ENCODE measurements at regions of chr1 and their contacts with region 1.

Region 1: DNA sequence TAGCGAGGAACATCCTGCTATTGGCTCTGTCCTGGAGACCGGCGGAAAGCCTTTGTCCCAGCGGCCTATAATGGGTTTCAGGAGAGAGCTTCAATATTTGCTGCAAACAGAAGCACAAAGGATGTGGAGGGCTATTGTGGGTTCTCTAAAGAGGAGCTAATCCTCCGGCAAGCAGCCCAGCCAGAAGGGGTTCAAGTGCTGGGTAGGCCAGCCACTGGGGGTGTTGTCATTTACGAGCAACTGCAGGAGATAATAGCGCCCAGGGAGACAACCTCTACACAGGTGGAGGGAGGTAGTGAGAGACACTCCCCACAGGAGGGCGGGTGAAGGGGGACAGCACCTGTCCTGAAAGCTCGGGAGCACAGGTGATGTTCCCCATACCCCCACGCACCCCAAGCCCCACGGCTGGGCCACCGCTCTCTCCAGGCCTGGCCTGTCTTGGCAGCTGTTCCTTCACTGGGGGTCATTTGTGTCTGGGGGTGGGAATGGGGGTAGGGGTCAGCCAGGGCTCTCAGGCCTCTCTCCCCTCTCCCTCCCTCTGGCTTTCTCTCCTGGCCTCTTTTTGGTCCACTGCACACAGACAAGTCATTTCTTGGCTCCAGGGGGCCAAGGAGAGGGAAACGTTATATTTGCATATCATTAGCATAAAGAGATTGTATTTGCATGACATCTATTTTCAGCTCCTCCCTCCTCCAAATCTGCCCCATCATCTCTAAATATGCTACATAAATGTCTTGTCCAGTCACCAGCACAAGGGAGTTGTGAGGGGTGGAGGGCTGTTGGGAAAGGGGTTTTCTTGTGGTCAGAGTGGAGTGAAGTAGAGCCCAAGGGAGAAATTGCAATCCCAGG is 22.0 kb upstream of the SLC26A9 start:
- DNase-seq: no peak
- ATAC-seq: no peak
- H3K4me3 ChIP-seq: no peak overlapping the region
- H3K27ac ChIP-seq: no peak overlapping the region
- H3K4me1 ChIP-seq: no peaks in the 10 kb centered on the region
- H3K27me3 ChIP-seq: peaks cover 36% of the 10 kb centered on the region
- CTCF ChIP-seq: no peak
- POLR2A ChIP-seq: no peak
- RAD21 ChIP-seq: no peak

Region 2: GRCh38 chr1:205925730-205926129 is 39.5 kb before region 1 on chr1:
- CTCF ChIA-PET with region 1: no interaction called
- POLR2A ChIA-PET with region 1: no interaction called
- dilution Hi-C with region 1: no loop called
- in situ Hi-C with region 1: loop called (anchors 5 kb)
- intact Hi-C with region 1: no loop called
- DNase-seq: peak; percentile 85
- ATAC-seq: peak; percentile 42
- H3K4me3 ChIP-seq: no peak overlapping the region
- H3K27ac ChIP-seq: no peak overlapping the region
- H3K4me1 ChIP-seq: no peaks in the 10 kb centered on the region
- H3K27me3 ChIP-seq: peaks cover 42% of the 10 kb centered on the region
- CTCF ChIP-seq: no peak
- POLR2A ChIP-seq: no peak
- RAD21 ChIP-seq: no peak

Region 3: DNA sequence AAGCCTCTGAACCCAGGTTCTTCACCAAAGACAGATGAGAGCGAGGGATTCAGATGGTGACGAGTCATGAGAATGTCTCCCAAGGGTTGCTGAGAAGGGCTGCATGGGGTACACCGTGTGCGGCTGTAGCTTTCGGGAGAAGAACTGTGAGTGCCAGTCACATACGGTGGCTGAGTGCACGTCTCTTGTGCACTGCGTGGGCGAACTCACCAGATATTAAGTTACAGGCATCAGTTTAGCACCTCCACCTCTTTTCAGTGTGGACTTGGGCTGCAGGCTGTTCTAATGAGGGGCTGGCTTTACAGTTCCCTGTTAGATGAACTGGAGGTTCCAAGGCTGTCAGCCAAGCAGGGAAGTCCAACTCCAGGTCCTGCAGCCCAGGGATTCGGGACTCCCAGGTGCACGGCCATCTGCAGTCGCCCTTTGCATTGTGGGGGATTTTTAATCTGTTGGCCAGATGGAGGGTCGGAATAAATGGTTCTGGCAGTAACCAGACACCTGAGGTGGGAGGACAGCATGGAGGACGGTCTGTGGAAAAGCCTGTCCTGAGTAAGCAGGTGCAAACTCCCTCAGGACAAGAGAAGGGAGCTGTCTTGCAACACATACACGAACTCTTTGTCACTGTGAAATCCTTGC is 178.4 kb after region 1 on chr1:
- CTCF ChIA-PET with region 1: no interaction called
- POLR2A ChIA-PET with region 1: no interaction called
- dilution Hi-C with region 1: no loop called
- in situ Hi-C with region 1: no loop called
- intact Hi-C with region 1: no loop called
- DNase-seq: no peak
- ATAC-seq: no peak
- H3K4me3 ChIP-seq: no peak overlapping the region
- H3K27ac ChIP-seq: no peak overlapping the region
- H3K4me1 ChIP-seq: no peaks in the 10 kb centered on the region
- H3K27me3 ChIP-seq: peaks cover 70% of the 10 kb centered on the region
- CTCF ChIP-seq: no peak
- POLR2A ChIP-seq: no peak
- RAD21 ChIP-seq: no peak